Calu3 (cell line): ENCODE measurements at regions of chr22 and their contacts with region 1.

Region 1: DNA sequence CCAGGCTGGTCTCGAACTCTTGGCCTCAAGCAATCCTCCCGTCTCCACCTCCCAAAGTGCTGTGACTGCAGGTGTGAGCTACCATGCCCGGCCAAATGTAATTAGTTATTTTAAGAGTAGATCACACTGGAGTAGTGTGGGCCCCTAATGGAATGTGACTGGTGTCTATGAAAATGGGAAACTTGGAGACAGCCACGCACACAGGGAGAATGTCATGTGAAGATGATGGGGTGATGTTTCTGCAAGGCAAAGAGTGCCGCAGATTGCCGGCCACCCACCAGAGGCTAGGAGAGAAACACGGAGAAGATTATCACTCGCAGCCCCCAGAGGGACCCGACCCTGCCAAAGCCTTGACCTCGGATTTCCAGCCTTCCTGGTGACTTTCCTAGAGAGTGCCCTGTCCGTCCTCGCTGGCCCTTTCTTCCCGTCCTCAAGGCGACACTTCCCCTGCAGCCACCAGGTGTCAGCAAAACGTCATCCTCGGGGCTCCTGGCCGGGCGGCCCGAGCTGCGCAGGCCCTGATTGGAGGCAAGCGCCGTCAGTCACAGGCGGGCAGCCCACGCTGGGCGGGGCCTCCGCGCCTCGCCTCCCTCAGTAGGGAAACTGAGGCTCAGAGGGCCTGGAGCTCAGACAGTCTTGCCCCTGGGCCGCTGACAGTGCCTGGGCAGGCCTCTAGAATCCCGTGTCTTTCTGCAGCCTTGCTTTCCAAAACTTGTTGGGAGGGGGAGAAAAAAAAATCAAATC is 16.3 kb downstream of the CRYBB2 start:
- DNase-seq: peak; percentile 95
- H3K4me3 Mint-ChIP-seq: peak overlapping the region; percentile 58
- H3K27ac Mint-ChIP-seq: peak overlapping the region; percentile 69
- H3K4me1 Mint-ChIP-seq: no peaks in the 10 kb centered on the region
- H3K27me3 Mint-ChIP-seq: peaks cover 69% of the 10 kb centered on the region
- CTCF ChIP-seq: peak; percentile 91

Region 2: GRCh38 chr22:25334162-25334490 is 98.4 kb after region 1 on chr22:
- CTCF ChIA-PET with region 1: interaction called, 4 read pairs
- intact Hi-C with region 1: loop called (anchors 10 kb)
- DNase-seq: peak; percentile 64
- H3K4me3 Mint-ChIP-seq: no peak overlapping the region
- H3K27ac Mint-ChIP-seq: no peak overlapping the region
- H3K4me1 Mint-ChIP-seq: no peaks in the 10 kb centered on the region
- H3K27me3 Mint-ChIP-seq: no peaks in the 10 kb centered on the region
- CTCF ChIP-seq: peak; percentile 37